ENCODE measurements at regions of chr22 and their contacts with region 1.

Region 1: GRCh38 chr22:30634471-30635233 is 929 bp upstream of the SLC35E4 start:
- DNase-seq: peak; percentile 83
- ATAC-seq: peak; percentile 57
- H3K4me3 Mint-ChIP-seq: peak overlapping the region; percentile 83
- H3K27ac Mint-ChIP-seq: peak overlapping the region; percentile 88
- H3K4me1 Mint-ChIP-seq: peaks cover 20% of the 10 kb centered on the region
- H3K27me3 Mint-ChIP-seq: no peaks in the 10 kb centered on the region
- CTCF ChIP-seq: no peak

Region 2: GRCh38 chr22:30212363-30212995 is 422.2 kb before region 1 on chr22:
- CTCF ChIA-PET with region 1: no interaction called
- POLR2A ChIA-PET with region 1: no interaction called
- intact Hi-C with region 1: no loop called
- DNase-seq: no peak
- ATAC-seq: no peak
- H3K4me3 Mint-ChIP-seq: no peak overlapping the region
- H3K27ac Mint-ChIP-seq: no peak overlapping the region
- H3K4me1 Mint-ChIP-seq: no peaks in the 10 kb centered on the region
- H3K27me3 Mint-ChIP-seq: peaks cover 12% of the 10 kb centered on the region
- CTCF ChIP-seq: no peak

Region 3: DNA sequence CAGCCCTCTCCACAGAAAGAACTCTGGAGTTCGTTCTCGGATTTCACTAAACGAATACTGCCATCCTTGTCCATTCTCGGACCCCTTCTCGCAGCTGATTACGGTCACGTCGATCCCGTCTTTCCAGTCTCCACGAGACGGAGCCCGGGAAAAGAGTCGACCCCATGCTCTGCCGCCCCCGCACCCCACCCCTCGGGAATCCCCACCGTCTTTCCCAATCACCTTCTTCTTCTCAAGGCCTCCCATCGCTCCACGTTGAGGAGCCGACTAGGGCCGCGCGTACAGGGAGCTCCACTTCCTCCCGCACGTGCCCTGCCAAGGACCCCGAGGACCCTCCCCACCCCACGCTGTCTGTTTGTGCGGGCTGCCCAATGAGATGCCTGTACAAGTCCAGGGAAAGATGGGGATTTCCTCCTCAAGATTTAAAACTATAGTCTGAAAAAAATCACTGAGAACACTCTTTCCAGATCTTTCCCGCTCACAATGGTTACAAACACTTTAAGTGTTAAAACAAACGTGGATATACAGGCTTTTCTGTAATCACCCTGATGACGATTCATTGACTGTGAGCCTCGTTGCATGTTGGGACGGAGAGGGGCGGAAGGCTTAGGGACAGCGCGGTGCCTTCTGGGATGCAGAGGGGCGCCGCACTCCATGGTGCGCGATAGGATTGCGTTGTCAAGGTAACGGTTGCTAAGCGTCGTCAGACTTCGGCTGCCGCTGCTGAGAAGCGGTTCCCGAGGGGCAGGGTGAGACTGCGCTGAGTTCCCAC is 42.9 kb before region 1 on chr22 and contains the start of gene PES1:
- CTCF ChIA-PET with region 1: interaction called, 5 read pairs
- POLR2A ChIA-PET with region 1: interaction called, 7 read pairs
- intact Hi-C with region 1: loop called (anchors 1 kb)
- DNase-seq: peak; percentile 87
- ATAC-seq: peak; percentile 95
- H3K4me3 Mint-ChIP-seq: no peak within 1 kb of the TSS
- H3K27ac Mint-ChIP-seq: no peak within 1 kb of the TSS
- H3K4me1 Mint-ChIP-seq: no peaks in the 10 kb centered on the region
- H3K27me3 Mint-ChIP-seq: peaks cover 1% of the 10 kb centered on the region
- CTCF ChIP-seq: no peak
- total RNA-seq, gene PES1: 124 TPM in 2 replicates

Region 4: GRCh38 chr22:30667494-30668385 is 33.1 kb after region 1 on chr22 and contains the start of gene DUSP18:
- CTCF ChIA-PET with region 1: interaction called, 6 read pairs
- POLR2A ChIA-PET with region 1: interaction called, 9 read pairs
- intact Hi-C with region 1: loop called (anchors 1 kb)
- DNase-seq: peak; percentile 95
- ATAC-seq: peak; percentile 94
- H3K4me3 Mint-ChIP-seq: peak within 1 kb of the TSS; percentile 97
- H3K27ac Mint-ChIP-seq: peak within 1 kb of the TSS; percentile 86
- H3K4me1 Mint-ChIP-seq: peaks cover 18% of the 10 kb centered on the region
- H3K27me3 Mint-ChIP-seq: no peaks in the 10 kb centered on the region
- CTCF ChIP-seq: no peak
- total RNA-seq, gene DUSP18: 12.0 and 13.5 TPM in 2 replicates

Region 5: GRCh38 chr22:30685178-30685577 is 50.5 kb after region 1 on chr22:
- CTCF ChIA-PET with region 1: no interaction called
- POLR2A ChIA-PET with region 1: no interaction called
- intact Hi-C with region 1: no loop called
- DNase-seq: no peak
- ATAC-seq: no peak
- H3K4me3 Mint-ChIP-seq: no peak overlapping the region
- H3K27ac Mint-ChIP-seq: no peak overlapping the region
- H3K4me1 Mint-ChIP-seq: no peaks in the 10 kb centered on the region
- H3K27me3 Mint-ChIP-seq: peaks cover 9% of the 10 kb centered on the region
- CTCF ChIP-seq: no peak

Region 6: DNA sequence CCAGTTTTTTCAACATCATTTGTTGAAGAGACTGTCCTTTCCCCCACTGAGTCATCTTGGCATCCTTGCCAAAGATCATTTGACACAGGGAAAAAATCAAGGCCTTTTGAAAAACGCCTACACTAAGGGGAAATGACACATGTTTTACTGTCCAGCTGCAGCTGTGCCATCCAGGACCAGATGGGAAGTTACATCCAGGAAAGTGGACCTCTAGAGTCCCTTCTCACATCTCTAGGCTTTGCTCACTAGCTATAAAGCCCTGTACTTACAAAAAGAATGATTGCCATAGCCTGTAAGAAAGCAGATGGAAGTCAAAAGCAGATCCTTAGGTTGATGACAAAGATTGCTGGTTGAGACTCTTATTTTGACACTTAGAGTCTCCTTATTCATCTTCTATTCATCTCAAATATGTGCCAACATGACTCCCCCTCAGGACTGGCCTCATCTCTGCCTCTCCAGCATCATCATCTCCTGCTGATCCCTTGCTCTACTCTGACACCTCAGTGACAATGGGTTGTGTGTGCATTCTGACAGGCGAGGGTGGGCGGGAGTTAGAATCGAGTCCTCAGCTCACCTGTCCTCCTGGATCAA is 82.8 kb after region 1 on chr22:
- CTCF ChIA-PET with region 1: no interaction called
- POLR2A ChIA-PET with region 1: no interaction called
- intact Hi-C with region 1: no loop called
- DNase-seq: no peak
- ATAC-seq: no peak
- H3K4me3 Mint-ChIP-seq: no peak overlapping the region
- H3K27ac Mint-ChIP-seq: no peak overlapping the region
- H3K4me1 Mint-ChIP-seq: no peaks in the 10 kb centered on the region
- H3K27me3 Mint-ChIP-seq: peaks cover 3% of the 10 kb centered on the region
- CTCF ChIP-seq: no peak

Region 7: DNA sequence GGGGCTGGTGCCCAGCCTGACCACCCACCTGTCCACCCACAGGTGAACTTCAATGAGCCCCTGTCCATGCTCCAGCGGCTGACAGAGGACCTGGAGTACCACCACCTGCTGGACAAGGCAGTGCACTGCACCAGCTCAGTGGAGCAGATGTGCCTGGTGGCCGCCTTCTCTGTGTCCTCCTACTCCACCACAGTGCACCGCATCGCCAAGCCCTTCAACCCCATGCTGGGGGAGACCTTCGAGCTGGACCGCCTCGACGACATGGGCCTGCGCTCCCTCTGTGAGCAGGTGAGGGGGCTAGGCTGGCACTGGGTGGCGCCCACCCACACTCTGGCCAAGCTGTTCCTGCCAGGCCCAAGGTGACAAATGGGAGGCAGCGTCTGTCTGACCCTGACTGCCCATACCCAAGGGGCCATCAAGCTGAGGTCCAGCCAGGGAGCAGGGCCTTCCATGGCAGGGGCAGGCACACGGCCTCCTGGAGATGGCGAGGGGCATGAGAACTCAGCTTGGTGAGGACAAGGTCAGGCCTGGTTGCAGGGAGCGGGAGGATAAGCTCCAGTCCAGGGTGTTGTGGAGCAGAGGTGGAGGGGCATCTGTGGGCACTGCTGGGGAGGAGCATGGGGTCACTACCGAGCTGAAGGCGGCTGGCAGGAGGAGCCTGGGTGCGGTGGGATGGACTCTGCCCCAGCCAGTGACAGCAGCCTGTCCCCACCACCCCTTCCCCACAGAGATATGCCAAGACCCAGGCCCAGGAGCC is 256.2 kb after region 1 on chr22:
- CTCF ChIA-PET with region 1: interaction called, 26 read pairs
- POLR2A ChIA-PET with region 1: no interaction called
- intact Hi-C with region 1: no loop called
- DNase-seq: peak; percentile 18
- ATAC-seq: peak; percentile 54
- H3K4me3 Mint-ChIP-seq: no peak overlapping the region
- H3K27ac Mint-ChIP-seq: no peak overlapping the region
- H3K4me1 Mint-ChIP-seq: no peaks in the 10 kb centered on the region
- H3K27me3 Mint-ChIP-seq: no peaks in the 10 kb centered on the region
- CTCF ChIP-seq: no peak

Region 8: GRCh38 chr22:31080848-31081649 is 446.4 kb after region 1 on chr22 and contains the start of gene SMTN:
- CTCF ChIA-PET with region 1: interaction called, 8 read pairs
- POLR2A ChIA-PET with region 1: interaction called, 14 read pairs
- intact Hi-C with region 1: loop called (anchors 1 kb)
- DNase-seq: peak; percentile 93
- ATAC-seq: peak; percentile 75
- H3K4me3 Mint-ChIP-seq: peak within 1 kb of the TSS; percentile 90
- H3K27ac Mint-ChIP-seq: no peak within 1 kb of the TSS
- H3K4me1 Mint-ChIP-seq: peaks cover 36% of the 10 kb centered on the region
- H3K27me3 Mint-ChIP-seq: no peaks in the 10 kb centered on the region
- CTCF ChIP-seq: no peak
- total RNA-seq, gene SMTN: 2.8 and 3.1 TPM in 2 replicates